Calu3 (cell line): ENCODE measurements at regions of chr15 and their contacts with region 1.

Region 1: GRCh38 chr15:57732526-57733331 is 26.2 kb downstream of the POLR2M start:
- DNase-seq: peak; percentile 78
- H3K4me3 Mint-ChIP-seq: no peak overlapping the region
- H3K27ac Mint-ChIP-seq: no peak overlapping the region
- H3K4me1 Mint-ChIP-seq: no peaks in the 10 kb centered on the region
- H3K27me3 Mint-ChIP-seq: no peaks in the 10 kb centered on the region
- CTCF ChIP-seq: peak; percentile 90

Region 2: GRCh38 chr15:57320631-57321220 is 412.0 kb before region 1 on chr15:
- CTCF ChIA-PET with region 1: no interaction called
- intact Hi-C with region 1: no loop called
- DNase-seq: no peak
- H3K4me3 Mint-ChIP-seq: no peak overlapping the region
- H3K27ac Mint-ChIP-seq: no peak overlapping the region
- H3K4me1 Mint-ChIP-seq: peaks cover 8% of the 10 kb centered on the region
- H3K27me3 Mint-ChIP-seq: no peaks in the 10 kb centered on the region
- CTCF ChIP-seq: no peak

Region 3: DNA sequence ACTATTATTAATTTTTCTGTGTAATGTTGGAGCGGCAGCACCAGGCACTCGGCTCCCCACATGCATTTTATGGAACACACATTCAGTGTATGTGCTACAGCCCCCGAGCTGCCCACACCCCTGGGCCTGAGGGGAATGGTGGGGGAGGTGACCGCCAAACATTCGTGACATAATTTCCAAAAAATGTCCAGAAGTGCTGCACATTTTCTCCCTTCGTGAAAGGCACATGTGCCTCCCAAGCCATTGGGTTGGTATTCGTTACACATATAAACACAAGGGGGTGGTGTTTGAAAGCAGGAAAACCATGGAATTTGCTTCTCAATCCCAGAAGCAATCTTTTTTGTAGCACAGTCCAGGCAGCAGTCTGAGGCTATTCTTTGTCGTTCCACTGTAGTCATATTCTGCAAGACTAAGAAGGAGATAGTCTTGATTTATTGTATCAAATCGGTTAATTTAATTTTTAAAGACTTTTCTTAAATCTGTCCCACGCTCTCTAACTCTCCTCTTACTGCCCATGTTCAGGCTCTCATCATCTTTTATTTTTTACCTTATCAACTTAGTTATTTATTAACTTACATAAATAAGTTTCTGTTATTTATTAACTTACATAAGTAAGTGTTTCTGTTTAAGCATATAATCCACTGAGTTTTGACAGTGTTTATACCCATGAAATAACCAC is 65.4 kb before region 1 on chr15:
- CTCF ChIA-PET with region 1: interaction called, 3 read pairs
- intact Hi-C with region 1: loop called (anchors 1 kb)
- DNase-seq: peak; percentile 55
- H3K4me3 Mint-ChIP-seq: peak overlapping the region; percentile 47
- H3K27ac Mint-ChIP-seq: peak overlapping the region; percentile 1
- H3K4me1 Mint-ChIP-seq: peaks cover 66% of the 10 kb centered on the region
- H3K27me3 Mint-ChIP-seq: no peaks in the 10 kb centered on the region
- CTCF ChIP-seq: no peak

Region 4: DNA sequence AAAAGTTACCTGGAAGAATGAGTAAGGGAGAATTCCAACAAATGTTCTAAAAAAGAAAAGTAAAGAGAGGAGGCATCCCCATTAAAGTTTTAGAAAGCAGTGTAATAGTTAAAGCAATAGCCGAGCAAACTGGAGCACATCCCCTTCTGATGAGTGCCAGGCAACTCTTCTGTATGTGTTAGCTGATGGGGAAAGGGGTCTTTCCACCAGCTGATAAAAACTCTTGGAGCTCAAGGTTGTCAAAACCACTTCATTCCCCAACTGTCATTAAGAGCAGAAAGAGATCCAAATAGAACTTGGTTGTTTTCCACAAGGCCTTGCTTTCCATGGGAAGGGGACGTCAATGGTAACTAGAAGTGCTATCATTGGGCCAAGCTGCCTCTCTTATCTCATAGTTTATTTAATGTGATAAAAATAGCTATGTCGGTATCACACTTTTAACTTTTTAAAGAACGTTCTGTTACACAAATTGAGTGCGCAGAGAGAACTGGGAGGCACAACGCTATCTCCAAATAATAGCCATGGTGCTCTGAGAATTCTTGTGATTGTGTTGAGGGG is 90.7 kb after region 1 on chr15:
- CTCF ChIA-PET with region 1: interaction called, 10 read pairs
- intact Hi-C with region 1: no loop called
- DNase-seq: no peak
- H3K4me3 Mint-ChIP-seq: no peak overlapping the region
- H3K27ac Mint-ChIP-seq: no peak overlapping the region
- H3K4me1 Mint-ChIP-seq: peaks cover 8% of the 10 kb centered on the region
- H3K27me3 Mint-ChIP-seq: peaks cover 34% of the 10 kb centered on the region
- CTCF ChIP-seq: no peak